PC-3 (cell line): ENCODE measurements at regions of chr12 and their contacts with region 1.

Region 1: DNA sequence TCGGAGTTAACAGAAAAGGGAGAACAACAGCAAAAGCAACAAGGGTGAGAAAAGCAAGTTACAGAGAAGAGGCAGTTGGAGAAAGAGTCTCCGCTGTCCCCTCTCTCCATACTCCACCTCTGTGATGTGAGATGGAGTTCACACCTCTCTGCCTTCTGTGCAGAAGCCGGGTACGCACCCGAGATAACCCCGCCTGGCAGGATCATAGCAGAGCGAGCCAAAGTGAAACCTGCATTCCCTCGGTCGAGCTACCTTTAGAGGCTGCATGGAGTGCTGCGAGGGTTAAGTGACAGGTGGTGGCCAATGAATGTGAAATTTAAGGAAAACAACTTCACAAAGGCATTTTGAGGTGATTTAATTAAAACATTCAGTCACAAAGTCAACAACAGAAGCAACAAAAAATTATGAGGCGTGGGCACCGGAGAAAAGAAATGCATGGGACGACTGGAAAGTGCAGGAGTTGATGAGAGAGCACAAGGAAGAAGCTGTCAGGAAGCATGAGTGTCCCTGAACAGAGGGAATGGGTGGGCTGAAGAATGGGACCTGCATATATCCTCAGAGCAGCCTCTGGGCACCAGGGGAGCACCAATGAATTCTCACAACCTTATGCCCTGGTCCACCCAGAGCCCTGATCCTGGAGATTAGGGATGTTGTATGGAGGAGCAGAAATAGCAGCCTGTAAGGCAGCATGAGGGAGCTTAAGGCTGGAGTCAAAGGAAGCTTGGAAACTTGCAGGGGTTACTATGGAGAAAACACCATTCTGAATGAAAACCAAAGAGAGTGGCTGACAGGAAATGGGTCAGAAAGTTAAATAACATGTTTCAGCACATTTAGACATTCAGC is 208.3 kb downstream of the EMP1 start:
- DNase-seq: no peak
- ATAC-seq: no peak
- H3K4me3 ChIP-seq: no peak overlapping the region
- H3K27ac ChIP-seq: no peak overlapping the region
- H3K4me1 ChIP-seq: no peaks in the 10 kb centered on the region
- H3K27me3 ChIP-seq: no peaks in the 10 kb centered on the region
- CTCF ChIP-seq: no peak

Region 2: DNA sequence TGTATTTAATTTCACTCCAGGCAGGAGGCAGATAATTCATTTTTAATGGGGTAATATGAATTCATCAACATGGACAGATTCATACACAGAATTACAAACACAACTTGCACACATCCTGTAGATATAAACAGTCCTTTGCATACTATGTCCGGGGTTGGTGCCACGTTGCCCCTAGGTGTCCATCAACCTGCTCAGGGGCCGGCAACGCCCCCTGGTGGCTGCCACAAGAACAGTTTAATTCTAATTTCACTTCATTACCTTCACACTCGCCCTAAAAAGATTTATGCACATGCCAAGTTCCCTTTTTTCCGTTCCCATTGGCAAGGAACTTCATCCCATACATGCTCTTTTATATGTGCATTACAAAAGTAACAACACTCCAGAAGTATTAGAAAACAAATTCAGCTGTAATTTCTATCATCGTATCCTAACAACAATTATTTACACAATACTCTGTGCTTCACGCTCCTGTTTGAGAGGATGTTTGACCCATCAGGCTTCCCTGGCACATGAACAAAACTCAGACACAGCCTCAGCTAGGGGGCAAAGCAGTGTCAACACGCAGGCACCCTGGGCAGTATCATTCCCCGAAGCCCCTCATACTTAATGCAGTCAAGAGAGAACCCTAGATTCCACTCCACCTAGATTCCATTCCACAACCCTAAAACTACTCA is 1070.3 kb before region 1 on chr12:
- CTCF ChIA-PET with region 1: no interaction called
- POLR2A ChIA-PET with region 1: no interaction called
- intact Hi-C with region 1: no loop called
- DNase-seq: peak; percentile 56
- ATAC-seq: peak; percentile 38
- H3K4me3 ChIP-seq: no peak overlapping the region
- H3K27ac ChIP-seq: peak overlapping the region; percentile 85
- H3K4me1 ChIP-seq: peaks cover 51% of the 10 kb centered on the region
- H3K27me3 ChIP-seq: no peaks in the 10 kb centered on the region
- CTCF ChIP-seq: peak; percentile 84

Region 3: GRCh38 chr12:13326076-13326475 is 78.8 kb before region 1 on chr12:
- CTCF ChIA-PET with region 1: no interaction called
- POLR2A ChIA-PET with region 1: no interaction called
- intact Hi-C with region 1: no loop called
- DNase-seq: no peak
- ATAC-seq: no peak
- H3K4me3 ChIP-seq: no peak overlapping the region
- H3K27ac ChIP-seq: no peak overlapping the region
- H3K4me1 ChIP-seq: no peaks in the 10 kb centered on the region
- H3K27me3 ChIP-seq: peaks cover 36% of the 10 kb centered on the region
- CTCF ChIP-seq: no peak

Region 4: DNA sequence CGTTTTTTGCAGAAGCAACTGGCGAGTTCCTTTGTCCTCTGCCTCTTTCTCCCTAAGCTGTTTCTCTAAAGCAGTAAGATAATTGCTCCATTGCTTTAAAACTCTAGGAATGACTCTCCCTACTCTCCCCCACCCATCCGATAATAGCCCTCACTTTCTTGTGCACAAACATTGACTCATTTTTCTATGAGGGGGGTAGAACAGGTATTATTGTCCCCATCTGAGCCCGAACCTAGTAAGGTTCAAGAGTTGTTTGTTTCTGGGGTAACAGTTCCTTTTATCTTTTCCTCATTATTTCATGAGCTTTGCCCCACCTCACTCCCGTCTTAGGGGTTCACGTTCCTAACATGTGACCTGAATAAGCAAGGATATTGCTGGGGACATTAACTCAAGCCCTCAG is 17.8 kb before region 1 on chr12:
- CTCF ChIA-PET with region 1: no interaction called
- POLR2A ChIA-PET with region 1: interaction called, 14 read pairs
- intact Hi-C with region 1: no loop called
- DNase-seq: peak; percentile 52
- ATAC-seq: no peak
- H3K4me3 ChIP-seq: peak overlapping the region; percentile 46; the same call in 1 of the 2 replicates
- H3K27ac ChIP-seq: peak overlapping the region; percentile 78
- H3K4me1 ChIP-seq: peaks cover 42% of the 10 kb centered on the region
- H3K27me3 ChIP-seq: no peaks in the 10 kb centered on the region
- CTCF ChIP-seq: no peak

Region 5: DNA sequence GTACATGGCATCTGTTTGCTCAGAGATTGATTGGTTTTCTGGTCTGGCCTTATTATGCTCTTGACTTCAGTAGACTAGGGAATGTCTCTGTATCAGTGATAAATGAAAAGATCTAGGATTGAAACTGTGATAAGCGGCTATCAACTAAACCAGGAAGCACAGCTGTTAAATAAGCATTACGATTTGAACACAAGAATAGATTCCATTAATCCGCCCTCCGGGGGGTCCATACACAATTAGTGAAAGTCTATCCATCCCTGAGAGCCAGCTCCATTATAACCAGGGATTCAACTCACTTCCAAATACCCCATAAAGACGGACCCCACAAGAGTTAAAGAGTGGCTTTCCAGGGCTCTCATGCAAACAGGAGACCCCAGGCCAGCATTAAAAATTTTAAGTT is 297.5 kb after region 1 on chr12:
- CTCF ChIA-PET with region 1: no interaction called
- POLR2A ChIA-PET with region 1: no interaction called
- intact Hi-C with region 1: no loop called
- DNase-seq: no peak
- ATAC-seq: no peak
- H3K4me3 ChIP-seq: no peak overlapping the region
- H3K27ac ChIP-seq: no peak overlapping the region
- H3K4me1 ChIP-seq: no peaks in the 10 kb centered on the region
- H3K27me3 ChIP-seq: peaks cover 53% of the 10 kb centered on the region
- CTCF ChIP-seq: no peak